ENCODE measurements at regions of chr4 and their contacts with region 1.

Region 1: DNA sequence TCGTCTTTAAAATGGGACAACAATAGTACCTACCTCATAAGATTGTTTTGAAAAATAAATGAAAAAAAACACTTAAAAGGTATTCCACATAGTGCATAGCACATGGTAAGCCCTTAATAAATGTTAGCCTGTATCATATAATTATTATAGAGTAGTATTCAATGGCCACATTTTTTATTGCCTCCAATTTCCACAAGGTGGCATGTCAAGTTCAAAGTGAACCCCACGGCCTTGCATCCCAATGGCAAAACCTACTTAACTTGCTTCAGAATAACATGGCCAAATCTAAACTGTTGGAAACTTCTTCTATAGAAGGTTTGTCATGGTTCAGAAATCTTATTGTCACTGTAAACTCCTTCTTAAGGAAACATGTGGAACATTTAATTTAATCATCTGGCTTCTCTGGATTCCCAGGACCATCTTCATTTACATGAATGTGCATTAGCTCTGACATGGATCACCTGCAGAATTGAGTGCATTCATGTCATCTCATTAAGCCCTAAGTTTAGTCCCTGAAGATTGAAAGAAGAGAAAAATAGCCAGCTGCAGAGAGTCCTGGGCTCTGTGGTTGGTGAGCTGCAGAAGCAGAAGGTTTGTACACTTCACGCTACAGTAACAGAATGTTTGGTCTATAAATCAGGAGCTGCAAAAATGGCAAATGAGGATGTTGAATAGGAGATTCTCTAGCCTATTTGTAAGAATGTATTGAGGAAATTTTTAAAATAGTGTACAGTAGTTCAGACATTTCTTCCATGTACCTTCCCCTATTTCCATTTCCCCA is 61.0 kb downstream of the ANXA3 start:
- DNase-seq: peak in 2 of 4 experiments; percentile 46 to 74
- ATAC-seq: peak; percentile 71
- H3K4me3 ChIP-seq: no peak overlapping the region
- H3K27ac ChIP-seq: no peak overlapping the region
- H3K4me1 ChIP-seq: peaks cover 18 to 77% of the 10 kb centered on the region in 2 experiments
- H3K27me3 ChIP-seq: no peaks in the 10 kb centered on the region
- CTCF ChIP-seq: peak; percentile 56 to 83 (median 66)
- EP300 ChIP-seq: no peak
- POLR2A ChIP-seq: no peak
- RAD21 ChIP-seq: peak; percentile 80 to 82

Region 2: DNA sequence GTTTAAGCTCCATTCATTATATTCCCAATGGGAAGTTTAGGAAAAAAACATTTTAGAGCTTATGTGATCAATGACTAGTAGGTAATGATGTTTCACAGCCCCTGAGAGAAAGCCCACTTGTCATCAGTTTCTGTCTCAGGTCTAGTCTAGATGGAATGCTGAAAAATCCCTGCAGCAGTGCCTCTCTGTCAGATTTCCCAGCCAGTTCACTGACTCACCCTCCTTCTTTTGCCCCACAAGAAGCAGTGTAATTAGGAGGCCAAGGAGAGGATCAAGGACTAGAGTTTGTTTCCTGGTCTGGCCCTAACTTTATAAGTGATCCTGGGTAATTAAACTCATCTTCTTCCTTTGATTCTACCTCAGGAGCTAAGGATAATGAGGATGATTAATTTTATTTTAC is 179.7 kb before region 1 on chr4:
- CTCF ChIA-PET with region 1: no interaction called
- POLR2A ChIA-PET with region 1: no interaction called
- in situ Hi-C with region 1: no loop called
- intact Hi-C with region 1: no loop called
- DNase-seq: no peak
- ATAC-seq: no peak
- H3K4me3 ChIP-seq: no peak overlapping the region
- H3K27ac ChIP-seq: no peak overlapping the region
- H3K4me1 ChIP-seq: no peaks in the 10 kb centered on the region
- H3K27me3 ChIP-seq: peaks cover 19% of the 10 kb centered on the region in 2 experiments
- CTCF ChIP-seq: no peak
- EP300 ChIP-seq: no peak
- POLR2A ChIP-seq: no peak
- RAD21 ChIP-seq: no peak

Region 3: DNA sequence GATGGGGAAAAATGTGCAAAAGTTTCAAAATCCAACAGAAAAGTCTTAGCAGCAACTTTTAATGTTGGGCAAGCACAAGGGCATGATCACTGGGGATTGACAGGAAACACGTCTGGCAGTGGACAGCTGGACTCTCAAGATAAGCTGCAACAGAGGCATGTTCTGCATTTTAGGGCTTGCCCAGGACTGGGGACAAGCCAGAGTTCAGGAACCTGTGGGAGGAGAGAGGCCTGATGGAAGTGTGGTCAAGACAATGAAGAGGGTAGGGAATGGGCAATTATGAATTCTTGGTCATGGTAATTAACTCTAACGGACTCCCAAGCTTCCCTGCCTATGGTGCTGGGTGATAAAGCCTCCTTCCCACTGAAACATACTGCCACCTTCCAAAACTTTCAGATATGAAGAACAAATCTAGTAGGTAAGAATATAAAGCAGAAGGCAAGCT is 12.6 kb before region 1 on chr4:
- CTCF ChIA-PET with region 1: no interaction called
- POLR2A ChIA-PET with region 1: interaction called, 4 read pairs
- in situ Hi-C with region 1: no loop called
- intact Hi-C with region 1: loop called (anchors 1 kb)
- DNase-seq: peak; percentile 56 to 94 (median 74)
- ATAC-seq: peak; percentile 93
- H3K4me3 ChIP-seq: no peak overlapping the region
- H3K27ac ChIP-seq: peak overlapping the region; percentile 67
- H3K4me1 ChIP-seq: peaks cover 8 to 27% of the 10 kb centered on the region in 2 experiments
- H3K27me3 ChIP-seq: no peaks in the 10 kb centered on the region
- CTCF ChIP-seq: no peak
- EP300 ChIP-seq: peak; percentile 94
- POLR2A ChIP-seq: no peak
- RAD21 ChIP-seq: peak in 1 of 2 experiments; percentile 5; a peak in 1 of 4 replicates

Region 4: GRCh38 chr4:78650091-78651024 is 37.8 kb after region 1 on chr4:
- CTCF ChIA-PET with region 1: no interaction called
- POLR2A ChIA-PET with region 1: no interaction called
- in situ Hi-C with region 1: no loop called
- intact Hi-C with region 1: loop called (anchors 2 kb)
- DNase-seq: peak; percentile 34 to 65 (median 52)
- ATAC-seq: peak; percentile 71
- H3K4me3 ChIP-seq: no peak overlapping the region
- H3K27ac ChIP-seq: peak overlapping the region; percentile 39; the same call in 2 of the 3 replicates
- H3K4me1 ChIP-seq: peaks cover 44 to 61% of the 10 kb centered on the region in 2 experiments
- H3K27me3 ChIP-seq: no peaks in the 10 kb centered on the region
- CTCF ChIP-seq: no peak
- EP300 ChIP-seq: peak; percentile 85
- POLR2A ChIP-seq: no peak
- RAD21 ChIP-seq: 0 out of 4 replicates have a peak, but pooled peaks of 1 of the 2 experiments have one; percentile 16

Region 5: DNA sequence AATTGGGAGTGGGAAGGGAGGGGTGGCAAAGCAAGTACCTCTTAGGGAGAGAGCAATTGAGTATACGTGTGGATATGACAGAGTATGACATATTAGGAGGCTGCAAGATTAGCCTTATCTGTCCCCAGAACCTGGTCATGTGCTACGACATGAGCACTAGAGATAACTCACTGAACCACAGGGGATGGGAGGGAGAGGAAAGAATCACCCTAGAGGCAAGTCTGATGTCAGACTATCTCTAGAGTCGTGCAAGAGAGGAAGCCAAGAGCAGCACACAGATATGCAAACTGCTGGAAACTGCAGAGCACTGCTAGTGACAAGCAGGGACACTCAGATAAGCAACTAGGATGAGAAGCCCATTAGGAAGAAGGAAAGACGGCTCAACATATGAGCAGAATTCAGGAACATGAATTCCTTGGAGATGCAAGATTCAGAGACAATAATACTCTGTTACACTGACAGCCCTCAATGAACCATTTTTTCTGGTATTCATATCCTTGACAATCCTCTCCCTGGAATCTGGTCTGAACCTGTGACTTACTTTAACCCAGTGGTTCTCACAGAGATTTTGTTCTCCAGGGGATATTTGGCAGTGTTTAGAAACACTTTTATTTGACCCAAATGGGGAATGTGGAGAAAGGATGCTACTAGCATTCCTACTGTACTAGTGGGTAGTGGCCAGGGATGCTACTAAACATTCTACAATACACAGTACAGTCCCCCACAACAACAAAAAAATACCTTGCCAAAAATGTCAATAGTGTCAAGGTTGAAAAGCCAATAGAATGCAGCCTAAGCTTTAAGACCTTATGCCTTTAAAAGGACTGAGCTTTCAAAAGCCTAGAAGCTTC is 79.6 kb after region 1 on chr4:
- CTCF ChIA-PET with region 1: no interaction called
- POLR2A ChIA-PET with region 1: no interaction called
- in situ Hi-C with region 1: loop called (anchors 5 kb)
- intact Hi-C with region 1: loop called (anchors 1 kb)
- DNase-seq: peak; percentile 91 to 98 (median 94)
- ATAC-seq: peak; percentile 94
- H3K4me3 ChIP-seq: no peak overlapping the region; the same call in 1 of the 2 replicates
- H3K27ac ChIP-seq: peak overlapping the region; percentile 73
- H3K4me1 ChIP-seq: peaks cover 32 to 74% of the 10 kb centered on the region in 2 experiments
- H3K27me3 ChIP-seq: no peaks in the 10 kb centered on the region
- CTCF ChIP-seq: no peak; a peak in 1 of 6 replicates
- EP300 ChIP-seq: peak; percentile 100
- POLR2A ChIP-seq: no peak
- RAD21 ChIP-seq: peak; percentile 46 to 59; a peak in 3 of 4 replicates

Region 6: DNA sequence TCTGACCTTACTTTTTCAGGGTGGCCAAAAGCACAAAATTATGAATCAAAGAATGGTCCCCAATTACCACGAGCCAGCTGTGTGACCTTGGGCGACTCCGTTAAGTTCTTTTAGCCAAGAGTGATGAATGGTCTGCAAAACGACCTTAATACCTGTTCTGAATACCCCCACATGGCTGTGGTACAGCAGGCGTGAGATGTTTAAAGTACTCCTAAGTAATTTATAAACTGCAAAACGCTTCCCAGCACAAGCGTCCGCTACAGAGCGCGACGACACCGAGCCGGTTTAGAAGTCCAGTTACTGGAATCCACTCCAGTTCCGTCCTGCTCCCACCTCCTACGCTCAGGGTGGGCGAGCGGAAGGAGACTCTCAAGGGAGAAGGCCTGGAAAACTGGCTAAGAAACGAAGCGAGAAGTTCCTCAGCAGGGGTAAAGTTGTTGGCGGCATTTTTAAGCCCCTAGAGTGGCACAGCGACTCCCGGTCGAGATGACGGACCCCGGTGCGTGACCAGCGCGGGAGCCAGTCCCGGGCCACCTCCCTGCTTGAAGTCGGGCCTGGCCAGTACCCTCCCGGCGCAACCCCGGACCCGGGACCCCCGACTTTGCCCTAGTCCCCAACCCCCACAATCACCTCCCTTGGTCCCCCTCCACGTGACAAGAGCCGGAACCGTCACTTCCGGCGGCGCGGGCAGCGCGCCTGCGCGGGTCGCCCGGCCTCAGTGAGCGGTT is 162.9 kb after region 1 on chr4:
- CTCF ChIA-PET with region 1: no interaction called
- POLR2A ChIA-PET with region 1: interaction called, 3 read pairs
- in situ Hi-C with region 1: no loop called
- intact Hi-C with region 1: loop called (anchors 2 kb)
- DNase-seq: peak in 3 of 4 experiments; percentile 89 to 92 (median 91)
- ATAC-seq: peak; percentile 42
- H3K4me3 ChIP-seq: peak overlapping the region; percentile 89
- H3K27ac ChIP-seq: peak overlapping the region; percentile 98
- H3K4me1 ChIP-seq: peaks cover 15 to 34% of the 10 kb centered on the region in 2 experiments
- H3K27me3 ChIP-seq: no peaks in the 10 kb centered on the region
- CTCF ChIP-seq: no peak
- EP300 ChIP-seq: peak; percentile 16; the same call in 1 of the 2 replicates
- POLR2A ChIP-seq: peak; percentile 76
- RAD21 ChIP-seq: no peak

Region 7: DNA sequence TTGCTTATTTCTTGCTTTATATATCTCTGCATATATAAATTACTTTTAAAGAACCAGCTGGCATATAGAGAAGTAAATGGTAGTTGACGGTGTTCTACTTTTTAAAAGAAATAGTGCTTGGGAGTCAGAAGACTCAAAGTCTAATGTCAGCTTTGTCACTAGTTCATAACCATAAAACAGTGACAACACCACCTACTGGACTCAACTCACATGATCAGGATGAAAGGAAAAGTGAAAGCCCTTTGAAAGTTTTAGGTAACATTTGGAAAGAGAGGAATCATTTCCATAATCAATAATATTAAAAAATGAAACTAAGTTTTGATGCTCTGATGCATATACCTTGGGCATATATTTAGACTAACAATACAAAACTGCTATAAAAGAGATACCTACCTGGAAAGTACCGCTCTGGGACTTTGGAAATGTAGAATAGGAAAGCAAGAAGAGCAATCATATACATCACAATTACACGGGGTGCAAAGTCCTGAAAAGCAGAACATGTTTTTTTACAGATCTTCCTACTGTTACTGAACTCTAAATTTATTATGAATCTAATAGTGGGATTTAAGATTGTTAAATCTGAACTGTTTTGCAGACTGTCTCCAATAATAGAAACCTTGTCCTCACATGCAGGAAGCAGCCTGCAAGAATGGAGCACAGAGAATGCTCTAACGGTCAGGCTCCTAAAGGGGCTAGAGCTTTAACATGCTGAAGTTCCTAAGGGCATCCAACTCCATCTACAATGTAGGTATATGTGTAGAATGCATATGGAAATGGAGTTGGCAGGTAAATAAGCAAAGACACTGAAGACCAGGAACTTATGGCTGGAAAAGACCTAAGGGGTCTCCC is 311.1 kb after region 1 on chr4:
- CTCF ChIA-PET with region 1: no interaction called
- POLR2A ChIA-PET with region 1: no interaction called
- in situ Hi-C with region 1: no loop called
- intact Hi-C with region 1: loop called (anchors 5 kb)
- DNase-seq: peak in 1 of 4 experiments; percentile 15
- ATAC-seq: peak; percentile 68
- H3K4me3 ChIP-seq: no peak overlapping the region
- H3K27ac ChIP-seq: no peak overlapping the region
- H3K4me1 ChIP-seq: peaks cover 0 to 8% of the 10 kb centered on the region in 2 experiments; a peak in 2 of 5 replicates
- H3K27me3 ChIP-seq: no peaks in the 10 kb centered on the region
- CTCF ChIP-seq: peak in 2 of 3 experiments; percentile 23 to 42; a peak in 2 of 6 replicates
- EP300 ChIP-seq: no peak
- POLR2A ChIP-seq: no peak
- RAD21 ChIP-seq: peak; percentile 23 to 54; a peak in 3 of 4 replicates